ENCODE measurements at regions of chr6 and their contacts with region 1.

Region 1: GRCh38 chr6:114085211-114085610 is 114.3 kb upstream of the HDAC2 start:
- DNase-seq: no peak
- ATAC-seq: no peak
- H3K4me3 ChIP-seq: no peak overlapping the region
- H3K27ac ChIP-seq: no peak overlapping the region
- H3K4me1 ChIP-seq: no peaks in the 10 kb centered on the region
- H3K27me3 ChIP-seq: no peaks in the 10 kb centered on the region
- CTCF ChIP-seq: no peak
- POLR2A ChIP-seq: no peak

Region 2: GRCh38 chr6:113960795-113961194 is 124.4 kb before region 1 on chr6:
- intact Hi-C with region 1: no loop called
- DNase-seq: no peak
- ATAC-seq: no peak
- H3K4me3 ChIP-seq: no peak overlapping the region
- H3K27ac ChIP-seq: no peak overlapping the region
- H3K4me1 ChIP-seq: no peaks in the 10 kb centered on the region
- H3K27me3 ChIP-seq: no peaks in the 10 kb centered on the region
- CTCF ChIP-seq: no peak
- POLR2A ChIP-seq: no peak

Region 3: DNA sequence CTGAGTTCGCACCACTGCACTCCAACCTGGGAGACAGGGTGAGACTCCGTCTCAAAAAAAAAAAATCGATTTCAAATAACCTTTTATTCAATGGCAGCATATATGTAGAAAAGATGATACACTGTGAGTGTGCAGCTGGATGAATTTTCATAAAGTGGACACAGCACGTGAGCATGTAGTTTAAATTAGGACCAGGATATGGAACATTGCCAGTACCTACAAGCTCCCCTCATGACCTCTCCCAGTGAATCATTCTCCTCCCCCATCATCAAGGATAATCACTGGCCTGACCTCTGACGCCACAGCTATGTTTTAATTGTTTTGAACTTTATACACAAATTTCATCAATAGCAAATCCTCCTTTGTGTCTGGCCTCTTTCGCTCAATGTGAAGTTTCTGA is 60.5 kb before region 1 on chr6:
- intact Hi-C with region 1: no loop called
- DNase-seq: no peak
- ATAC-seq: no peak
- H3K4me3 ChIP-seq: no peak overlapping the region
- H3K27ac ChIP-seq: no peak overlapping the region
- H3K4me1 ChIP-seq: no peaks in the 10 kb centered on the region
- H3K27me3 ChIP-seq: no peaks in the 10 kb centered on the region
- CTCF ChIP-seq: no peak
- POLR2A ChIP-seq: no peak

Region 4: DNA sequence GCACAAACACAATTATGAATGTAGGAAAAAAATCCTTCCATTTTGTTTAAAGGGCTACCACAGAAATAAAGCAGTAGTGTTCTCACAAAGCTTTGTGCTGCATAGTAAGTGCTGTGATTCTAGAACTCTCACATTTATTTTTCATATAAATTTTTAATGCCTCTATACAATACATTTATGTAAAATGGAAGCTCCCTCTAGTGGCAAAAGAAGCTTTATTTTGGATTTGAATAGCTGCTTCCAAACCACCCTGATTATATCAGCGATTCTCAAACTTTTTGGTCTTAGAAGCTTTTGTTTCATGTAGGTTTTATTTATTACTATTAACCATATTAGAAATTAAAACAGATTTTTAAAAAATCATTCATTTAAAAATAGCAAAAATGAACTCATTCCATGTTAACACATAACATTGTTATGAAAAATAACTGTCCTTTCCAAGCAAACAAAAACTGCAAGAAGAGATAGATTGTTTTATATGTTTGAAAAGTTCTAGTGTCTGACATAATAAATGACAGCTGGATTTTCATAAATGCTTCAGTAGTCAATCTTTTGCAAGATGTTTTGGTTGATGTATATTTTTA is 219.2 kb after region 1 on chr6:
- intact Hi-C with region 1: loop called in 1 of 2 experiments (anchors 5 kb)
- DNase-seq: no peak
- ATAC-seq: no peak
- H3K4me3 ChIP-seq: no peak overlapping the region
- H3K27ac ChIP-seq: no peak overlapping the region
- H3K4me1 ChIP-seq: peaks cover 0 to 8% (median 0%) of the 10 kb centered on the region in 4 donors
- H3K27me3 ChIP-seq: peaks cover 0 to 5% of the 10 kb centered on the region in 2 donors
- CTCF ChIP-seq: peak; percentile 20 to 55 (median 47)
- POLR2A ChIP-seq: no peak